Cardiac septum (tissue), 1 donor: ENCODE measurements at regions of chrX and their contacts with region 1.

Region 1: GRCh38 chrX:69222103-69223090 is 57.1 kb upstream of the PJA1 start:
- DNase-seq: peak; percentile 77

Region 2: DNA sequence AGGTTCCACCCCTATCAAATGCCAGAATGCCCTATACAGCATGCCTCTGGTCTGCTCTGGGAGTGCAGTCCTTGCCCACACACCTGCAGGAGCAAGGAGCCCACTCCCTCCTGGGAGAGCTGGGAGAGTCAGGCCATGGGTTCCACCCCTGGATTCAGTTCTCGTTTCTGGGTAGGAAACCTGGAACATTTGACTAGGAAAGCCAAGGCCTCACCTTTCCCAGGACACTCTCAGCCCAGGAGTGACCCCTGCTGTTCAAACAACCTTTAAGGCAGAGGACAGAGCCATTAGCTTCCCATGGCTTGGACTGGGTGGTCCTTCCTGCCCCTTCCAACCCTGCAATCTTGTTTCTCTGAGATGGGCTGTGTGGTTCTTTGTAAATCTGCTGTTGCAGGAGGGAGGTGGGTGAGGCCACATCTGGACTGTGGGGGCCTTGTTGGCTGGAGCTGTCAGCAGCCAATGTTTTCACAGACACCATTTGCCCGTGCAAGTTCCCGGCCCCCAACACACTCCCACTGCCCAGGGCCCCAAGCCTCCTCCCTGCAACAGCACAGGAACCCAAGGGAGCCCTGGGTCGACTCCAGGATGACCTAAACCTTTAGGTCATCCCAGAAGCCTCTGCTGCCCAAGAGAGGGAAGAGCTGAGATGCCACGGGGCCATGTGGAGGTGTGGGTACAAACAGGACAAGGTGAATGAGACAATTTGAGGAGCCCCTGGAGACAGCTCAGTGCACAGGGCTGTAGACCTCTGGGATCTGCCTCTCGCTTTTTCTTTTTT is 161.6 kb before region 1 on chrX:
- intact Hi-C with region 1: loop called (anchors 10 kb)
- DNase-seq: peak; percentile 63

Region 3: DNA sequence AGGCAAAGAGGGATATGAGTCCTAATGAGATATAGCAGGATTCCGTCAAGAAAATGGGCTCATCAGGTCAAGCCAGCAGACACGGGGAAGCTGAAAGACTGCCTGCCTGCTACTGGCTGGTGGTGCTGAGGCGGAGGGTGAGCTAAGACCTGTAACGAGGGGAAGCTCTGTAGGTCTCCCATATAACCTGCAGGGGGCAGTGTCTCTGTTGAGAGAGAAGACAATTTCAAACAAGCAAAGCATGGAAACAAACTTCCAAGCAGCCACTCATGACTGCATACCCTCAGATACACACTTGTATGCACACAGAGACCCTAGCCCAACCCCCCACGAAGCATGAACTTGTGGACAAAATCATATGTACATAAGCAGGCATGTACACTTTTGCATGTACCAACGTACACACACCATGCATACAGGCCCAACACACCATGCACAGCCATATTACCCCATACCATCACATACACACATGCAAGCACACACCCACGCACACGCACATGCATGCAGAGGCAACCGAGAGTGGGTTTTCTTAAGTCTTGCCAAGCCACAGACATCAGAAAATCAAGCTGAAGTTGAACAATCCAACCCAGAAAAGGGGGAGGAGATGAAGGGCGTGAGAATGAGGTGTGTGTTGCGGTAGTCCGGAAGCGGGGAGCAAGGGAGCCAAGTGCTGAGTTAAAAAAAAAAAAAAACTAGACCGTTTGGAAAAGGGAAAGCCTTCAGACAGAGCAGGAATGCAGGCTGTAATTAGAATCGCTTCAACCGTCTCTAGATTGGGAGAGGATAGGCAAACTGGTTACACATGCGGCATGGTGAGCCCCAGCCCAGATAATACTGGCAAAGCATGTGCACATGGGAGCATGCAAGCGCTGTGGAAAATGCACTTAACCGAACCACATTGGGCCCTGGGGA is 128.2 kb before region 1 on chrX:
- intact Hi-C with region 1: loop called (anchors 5 kb)
- DNase-seq: no peak

Region 4: GRCh38 chrX:69158166-69158980 is 64.0 kb before region 1 on chrX:
- intact Hi-C with region 1: loop called (anchors 5 kb)
- DNase-seq: peak; percentile 73